ENCODE measurements at regions of chr7 and their contacts with region 1.

Region 1: GRCh38 chr7:77247206-77247850 is 47.7 kb upstream of the FGL2 start:
- DNase-seq: peak; percentile 66 to 76
- H3K4me3 ChIP-seq: no peak overlapping the region
- H3K27ac ChIP-seq: no peak overlapping the region
- H3K4me1 ChIP-seq: peaks cover 19 to 21% of the 10 kb centered on the region in 2 donors
- H3K27me3 ChIP-seq: no peaks in the 10 kb centered on the region
- CTCF ChIP-seq: peak; percentile 51 to 91 (median 82)
- POLR2A ChIP-seq: no peak

Region 2: GRCh38 chr7:77331938-77332695 is 84.8 kb after region 1 on chr7:
- intact Hi-C with region 1: loop called (anchors 10 kb)
- DNase-seq: peak; percentile 74 to 80
- H3K4me3 ChIP-seq: no peak overlapping the region
- H3K27ac ChIP-seq: peak overlapping the region in 2 of 3 donors; percentile 13 to 95
- H3K4me1 ChIP-seq: peaks cover 46 to 49% of the 10 kb centered on the region in 2 donors
- H3K27me3 ChIP-seq: no peaks in the 10 kb centered on the region
- CTCF ChIP-seq: peak in 5 of 6 experiments; percentile 57 to 97 (median 86)
- POLR2A ChIP-seq: peak in 1 of 2 donors; percentile 16

Measured in thyroid gland (tissue), 4 donors.